B cell (primary cell): ENCODE measurements at regions of chr17 and their contacts with region 1.

Region 1: DNA sequence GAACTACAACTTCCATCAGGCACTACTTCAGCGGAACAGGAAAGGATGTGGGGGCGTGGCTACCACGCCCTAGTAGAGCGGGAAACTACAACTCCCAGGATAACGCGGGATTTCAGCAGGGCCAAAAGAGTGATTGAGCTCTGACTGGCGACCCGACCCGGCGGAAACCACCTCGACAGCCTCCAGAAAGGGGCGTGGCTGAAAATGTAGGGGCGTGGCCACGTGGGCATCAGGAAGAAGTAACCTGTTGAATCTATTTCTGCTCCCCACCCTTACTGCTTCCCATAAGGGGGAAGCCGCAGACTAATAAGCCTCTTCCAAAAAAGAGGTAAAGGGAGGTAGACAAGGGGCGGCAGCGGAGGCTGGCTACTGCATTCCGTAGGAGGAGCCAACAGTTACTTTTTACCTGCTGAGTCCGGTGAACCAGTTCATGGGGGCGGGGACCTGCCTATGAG is at the start of gene TMEM102:
- DNase-seq: peak; percentile 99
- ATAC-seq: peak; percentile 87
- H3K4me3 ChIP-seq: peak within 1 kb of the TSS; percentile 77 to 93 (median 79)
- H3K4me3 Mint-ChIP-seq: peak within 1 kb of the TSS; percentile 96
- H3K27ac ChIP-seq: peak within 1 kb of the TSS; percentile 80 to 82
- H3K27ac Mint-ChIP-seq: peak within 1 kb of the TSS; percentile 94
- H3K4me1 ChIP-seq: peaks cover 41 to 45% of the 10 kb centered on the region in 2 donors
- H3K4me1 Mint-ChIP-seq: peaks cover 43% of the 10 kb centered on the region
- H3K27me3 ChIP-seq: peaks cover 0 to 24% (median 17%) of the 10 kb centered on the region in 4 experiments
- H3K27me3 Mint-ChIP-seq: peaks cover 17% of the 10 kb centered on the region
- CTCF ChIP-seq: no peak
- total RNA-seq, gene TMEM102: 17.7 and 19.1 TPM in 2 replicates

Region 2: GRCh38 chr17:7035591-7036368 is 399.5 kb before region 1 on chr17 and contains the start of gene SLC16A13:
- CTCF ChIA-PET with region 1: no interaction called
- POLR2A ChIA-PET with region 1: no interaction called
- intact Hi-C with region 1: loop called (anchors 5 kb)
- DNase-seq: peak; percentile 99
- ATAC-seq: peak; percentile 94
- H3K4me3 ChIP-seq: peak within 1 kb of the TSS; percentile 58 to 97 (median 88)
- H3K4me3 Mint-ChIP-seq: peak within 1 kb of the TSS; percentile 94
- H3K27ac ChIP-seq: peak within 1 kb of the TSS; percentile 86 to 100
- H3K27ac Mint-ChIP-seq: peak within 1 kb of the TSS; percentile 98
- H3K4me1 ChIP-seq: peaks cover 18 to 38% of the 10 kb centered on the region in 2 donors
- H3K4me1 Mint-ChIP-seq: peaks cover 42% of the 10 kb centered on the region
- H3K27me3 ChIP-seq: no peaks in the 10 kb centered on the region
- H3K27me3 Mint-ChIP-seq: no peaks in the 10 kb centered on the region
- CTCF ChIP-seq: no peak
- total RNA-seq, gene SLC16A13: 21.7 and 21.9 TPM in 2 replicates

Region 3: GRCh38 chr17:7280519-7281429 is 154.5 kb before region 1 on chr17:
- CTCF ChIA-PET with region 1: interaction called, 5 read pairs
- POLR2A ChIA-PET with region 1: no interaction called
- intact Hi-C with region 1: loop called (anchors 1 kb)
- DNase-seq: peak; percentile 85
- ATAC-seq: peak; percentile 84
- H3K4me3 ChIP-seq: peak overlapping the region; percentile 2 to 69 (median 53)
- H3K4me3 Mint-ChIP-seq: peak overlapping the region; percentile 92
- H3K27ac ChIP-seq: no peak overlapping the region
- H3K27ac Mint-ChIP-seq: peak overlapping the region; percentile 76
- H3K4me1 ChIP-seq: peaks cover 20 to 31% of the 10 kb centered on the region in 2 donors
- H3K4me1 Mint-ChIP-seq: peaks cover 20% of the 10 kb centered on the region
- H3K27me3 ChIP-seq: peaks cover 0 to 46% (median 13%) of the 10 kb centered on the region in 4 experiments
- H3K27me3 Mint-ChIP-seq: peaks cover 18% of the 10 kb centered on the region
- CTCF ChIP-seq: peak; percentile 91

Region 4: GRCh38 chr17:7454980-7455379 is 19.7 kb after region 1 on chr17:
- CTCF ChIA-PET with region 1: interaction called, 35 read pairs
- POLR2A ChIA-PET with region 1: interaction called, 10 read pairs
- intact Hi-C with region 1: loop called (anchors 1 kb)
- DNase-seq: no peak
- ATAC-seq: no peak
- H3K4me3 ChIP-seq: peak overlapping the region; percentile 55 to 99 (median 90)
- H3K4me3 Mint-ChIP-seq: peak overlapping the region; percentile 91
- H3K27ac ChIP-seq: no peak overlapping the region
- H3K27ac Mint-ChIP-seq: peak overlapping the region; percentile 81
- H3K4me1 ChIP-seq: peaks cover 5 to 10% of the 10 kb centered on the region in 2 donors
- H3K4me1 Mint-ChIP-seq: peaks cover 11% of the 10 kb centered on the region
- H3K27me3 ChIP-seq: no peaks in the 10 kb centered on the region
- H3K27me3 Mint-ChIP-seq: peaks cover 4% of the 10 kb centered on the region
- CTCF ChIP-seq: no peak

Region 5: GRCh38 chr17:7484067-7484918 is 49.0 kb after region 1 on chr17 and contains the start of gene POLR2A:
- CTCF ChIA-PET with region 1: interaction called, 17 read pairs
- POLR2A ChIA-PET with region 1: interaction called, 27 read pairs
- intact Hi-C with region 1: loop called (anchors 1 kb)
- DNase-seq: peak; percentile 99
- ATAC-seq: peak; percentile 63
- H3K4me3 ChIP-seq: peak within 1 kb of the TSS; percentile 80 to 100 (median 97)
- H3K4me3 Mint-ChIP-seq: peak within 1 kb of the TSS; percentile 99
- H3K27ac ChIP-seq: peak within 1 kb of the TSS; percentile 100
- H3K27ac Mint-ChIP-seq: peak within 1 kb of the TSS; percentile 100
- H3K4me1 ChIP-seq: peaks cover 29 to 53% of the 10 kb centered on the region in 2 donors
- H3K4me1 Mint-ChIP-seq: peaks cover 71% of the 10 kb centered on the region
- H3K27me3 ChIP-seq: no peaks in the 10 kb centered on the region
- H3K27me3 Mint-ChIP-seq: no peaks in the 10 kb centered on the region
- CTCF ChIP-seq: no peak
- total RNA-seq, gene POLR2A: 225 and 240 TPM in 2 replicates

Region 6: GRCh38 chr17:7572588-7573323 is 137.5 kb after region 1 on chr17:
- CTCF ChIA-PET with region 1: interaction called, 4 read pairs
- POLR2A ChIA-PET with region 1: interaction called, 3 read pairs
- intact Hi-C with region 1: loop called (anchors 1 kb)
- DNase-seq: peak; percentile 100
- ATAC-seq: peak; percentile 83
- H3K4me3 ChIP-seq: peak overlapping the region; percentile 72 to 98 (median 93)
- H3K4me3 Mint-ChIP-seq: peak overlapping the region; percentile 94
- H3K27ac ChIP-seq: peak overlapping the region; percentile 85 to 94
- H3K27ac Mint-ChIP-seq: peak overlapping the region; percentile 99
- H3K4me1 ChIP-seq: peaks cover 22 to 29% of the 10 kb centered on the region in 2 donors
- H3K4me1 Mint-ChIP-seq: peaks cover 52% of the 10 kb centered on the region
- H3K27me3 ChIP-seq: no peaks in the 10 kb centered on the region
- H3K27me3 Mint-ChIP-seq: no peaks in the 10 kb centered on the region
- CTCF ChIP-seq: no peak